ENCODE measurements at regions of chr20 and their contacts with region 1.

Region 1: GRCh38 chr20:31822421-31823330 is 3.5 kb downstream of the MYLK2 start:
- H3K4me3 ChIP-seq: no peak overlapping the region
- H3K27ac ChIP-seq: no peak overlapping the region
- H3K4me1 ChIP-seq: no peaks in the 10 kb centered on the region
- CTCF ChIP-seq: peak; percentile 94

Region 2: GRCh38 chr20:31691646-31692275 is 130.9 kb before region 1 on chr20:
- CTCF ChIA-PET with region 1: no interaction called
- POLR2A ChIA-PET with region 1: no interaction called
- H3K4me3 ChIP-seq: no peak overlapping the region
- H3K27ac ChIP-seq: peak overlapping the region; percentile 59
- H3K4me1 ChIP-seq: peaks cover 17% of the 10 kb centered on the region
- CTCF ChIP-seq: no peak

Region 3: GRCh38 chr20:31811796-31812728 is 10.6 kb before region 1 on chr20:
- CTCF ChIA-PET with region 1: interaction called, 15 read pairs
- POLR2A ChIA-PET with region 1: interaction called, 3 read pairs
- H3K4me3 ChIP-seq: no peak overlapping the region
- H3K27ac ChIP-seq: no peak overlapping the region
- H3K4me1 ChIP-seq: no peaks in the 10 kb centered on the region
- CTCF ChIP-seq: no peak

Region 4: DNA sequence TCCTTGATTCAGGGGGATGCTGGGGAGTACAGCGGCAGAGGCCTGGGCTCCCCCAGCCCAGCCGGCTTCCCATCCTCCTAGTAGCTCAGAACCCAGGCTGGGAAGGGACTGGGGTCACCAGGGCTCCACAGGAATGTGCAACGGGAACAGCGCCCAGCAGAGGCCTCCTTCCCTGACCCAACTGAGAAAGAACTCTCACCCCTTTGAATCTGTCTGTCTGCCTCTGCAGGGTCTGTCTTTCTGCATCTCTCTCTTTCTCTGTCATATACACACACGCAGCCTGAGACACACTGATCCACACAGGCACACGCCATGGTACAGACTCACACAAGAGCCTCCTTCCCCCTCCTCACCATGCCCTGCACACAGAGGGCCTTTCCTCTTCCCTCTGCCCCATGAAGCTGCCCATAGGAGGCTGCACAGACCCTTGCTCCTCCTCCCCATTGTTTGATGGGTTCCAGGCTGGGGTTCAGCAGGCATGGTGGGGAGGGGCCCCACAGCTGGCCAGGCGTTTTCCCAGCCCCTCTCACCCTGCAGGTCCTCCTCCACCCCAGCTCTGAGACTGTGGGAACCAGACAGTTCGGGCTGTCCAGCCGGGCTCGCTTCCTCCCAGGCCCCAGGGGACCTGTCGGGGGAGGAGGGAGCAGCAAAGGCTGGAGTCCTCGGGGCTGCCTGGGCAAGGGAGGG is 19.9 kb after region 1 on chr20:
- CTCF ChIA-PET with region 1: interaction called, 71 read pairs
- POLR2A ChIA-PET with region 1: interaction called, 7 read pairs
- H3K4me3 ChIP-seq: no peak overlapping the region
- H3K27ac ChIP-seq: no peak overlapping the region
- H3K4me1 ChIP-seq: no peaks in the 10 kb centered on the region
- CTCF ChIP-seq: no peak

Region 5: DNA sequence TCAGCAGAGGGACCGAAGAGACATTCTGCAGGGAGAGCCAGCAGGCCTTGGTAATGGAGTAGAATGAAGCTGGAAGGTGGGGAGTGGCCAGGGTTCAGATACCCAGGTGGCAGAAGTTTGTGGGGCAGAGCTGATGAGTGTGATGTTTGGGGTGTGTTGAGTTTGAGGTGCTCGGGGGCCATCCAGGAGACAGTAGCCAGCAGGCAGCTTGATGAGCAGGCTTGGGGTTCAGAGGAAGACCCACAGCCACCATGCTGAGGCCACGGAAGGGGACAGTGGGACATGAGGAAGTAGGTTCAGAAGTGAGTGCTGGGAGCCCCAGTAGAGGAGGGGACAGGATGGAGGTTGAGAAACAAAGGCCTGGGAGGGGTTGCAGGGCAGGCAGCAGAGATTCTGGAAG is 33.8 kb after region 1 on chr20:
- CTCF ChIA-PET with region 1: interaction called, 25 read pairs
- POLR2A ChIA-PET with region 1: no interaction called
- H3K4me3 ChIP-seq: no peak overlapping the region
- H3K27ac ChIP-seq: no peak overlapping the region
- H3K4me1 ChIP-seq: no peaks in the 10 kb centered on the region
- CTCF ChIP-seq: no peak

Region 6: DNA sequence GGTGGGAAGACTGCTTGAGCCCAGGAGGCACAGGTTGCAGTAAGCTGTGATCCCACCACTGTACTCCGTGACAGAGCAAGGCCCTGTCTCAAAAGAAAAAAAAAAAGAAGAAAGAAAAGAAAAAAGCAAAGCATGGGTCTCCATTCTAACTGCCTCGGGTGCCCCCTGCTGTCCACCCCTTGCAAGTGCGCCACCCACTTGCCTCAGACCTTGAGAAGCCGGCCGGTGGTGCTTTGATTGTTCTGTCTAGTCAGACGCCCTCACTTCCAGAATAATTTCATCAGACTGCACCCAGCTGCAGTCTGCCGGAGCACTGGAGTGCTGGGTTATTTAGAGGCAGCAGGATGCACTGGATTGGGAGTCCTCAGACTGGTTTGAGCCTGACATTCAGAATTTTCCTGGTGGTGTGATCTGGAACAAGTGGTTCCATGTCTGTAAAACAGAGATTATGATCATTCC is 269.2 kb after region 1 on chr20:
- CTCF ChIA-PET with region 1: interaction called, 11 read pairs
- POLR2A ChIA-PET with region 1: no interaction called
- H3K4me3 ChIP-seq: no peak overlapping the region
- H3K27ac ChIP-seq: no peak overlapping the region
- H3K4me1 ChIP-seq: no peaks in the 10 kb centered on the region
- CTCF ChIP-seq: peak; percentile 89